Activated T-helper 2 cell treated with anti-CD3 and anti-CD28 coated beads, Interferon-gamma antibody, Interleukin-2, Interleukin-4, amounts not matched to agents 10 μg/mL and 5 μg/mL and 100 μg/mL, durations not matched to agents 14 hours and 24 hours and 36 hours (primary cell): ENCODE measurements at regions of chr15 and their contacts with region 1.

Region 1: DNA sequence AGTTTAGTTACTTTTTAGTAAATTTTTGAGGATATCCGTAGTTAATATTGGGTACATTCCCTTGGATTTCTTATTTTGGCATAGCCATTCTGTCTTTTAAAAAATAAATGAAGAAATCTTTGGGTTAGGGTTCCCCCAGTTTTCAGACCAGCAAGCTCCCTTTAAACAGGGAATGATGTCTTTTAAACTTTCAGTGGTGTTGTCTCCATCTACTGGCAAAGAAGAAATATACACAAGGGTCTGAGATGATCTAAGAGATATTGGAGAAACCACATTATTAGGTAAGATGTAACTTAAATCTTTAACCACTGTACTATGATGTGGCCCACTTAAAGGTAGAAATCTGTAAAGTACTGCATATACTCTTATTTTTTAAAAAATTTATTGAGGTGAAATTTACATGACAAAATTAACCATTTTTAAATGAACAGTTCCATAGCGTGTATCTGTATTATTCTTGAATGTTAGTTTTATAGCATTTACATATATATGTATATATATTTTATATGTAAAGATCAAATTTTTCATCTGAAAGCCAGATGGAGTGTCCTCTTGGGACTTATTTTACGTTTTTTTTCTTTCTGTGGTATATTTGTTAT is 35.1 kb upstream of the EIF3J start:
- DNase-seq: no peak
- H3K4me3 Mint-ChIP-seq: no peak overlapping the region
- H3K27ac Mint-ChIP-seq: peak overlapping the region; percentile 68
- H3K4me1 Mint-ChIP-seq: peaks cover 23% of the 10 kb centered on the region
- H3K27me3 Mint-ChIP-seq: no peaks in the 10 kb centered on the region

Region 2: GRCh38 chr15:44215594-44215993 is 286.3 kb before region 1 on chr15:
- intact Hi-C with region 1: loop called (anchors 2 kb)
- DNase-seq: no peak
- H3K4me3 Mint-ChIP-seq: no peak overlapping the region
- H3K27ac Mint-ChIP-seq: no peak overlapping the region
- H3K4me1 Mint-ChIP-seq: peaks cover 2% of the 10 kb centered on the region
- H3K27me3 Mint-ChIP-seq: peaks cover 21% of the 10 kb centered on the region

Region 3: GRCh38 chr15:44286814-44287452 is 214.9 kb before region 1 on chr15:
- intact Hi-C with region 1: loop called (anchors 2 kb)
- DNase-seq: no peak
- H3K4me3 Mint-ChIP-seq: peak overlapping the region; percentile 95
- H3K27ac Mint-ChIP-seq: peak overlapping the region; percentile 99
- H3K4me1 Mint-ChIP-seq: peaks cover 30% of the 10 kb centered on the region
- H3K27me3 Mint-ChIP-seq: peaks cover 8% of the 10 kb centered on the region

Region 4: GRCh38 chr15:44450172-44450571 is 51.7 kb before region 1 on chr15:
- intact Hi-C with region 1: loop called (anchors 1 kb)
- DNase-seq: no peak
- H3K4me3 Mint-ChIP-seq: no peak overlapping the region
- H3K27ac Mint-ChIP-seq: no peak overlapping the region
- H3K4me1 Mint-ChIP-seq: peaks cover 31% of the 10 kb centered on the region
- H3K27me3 Mint-ChIP-seq: no peaks in the 10 kb centered on the region